GM13976 (cell line): ENCODE measurements at regions of chr12 and their contacts with region 1.

Region 1: GRCh38 chr12:46153268-46153872 is 115.5 kb downstream of the SLC38A1 start:
- DNase-seq: no peak
- CTCF ChIP-seq: peak; percentile 60

Region 2: DNA sequence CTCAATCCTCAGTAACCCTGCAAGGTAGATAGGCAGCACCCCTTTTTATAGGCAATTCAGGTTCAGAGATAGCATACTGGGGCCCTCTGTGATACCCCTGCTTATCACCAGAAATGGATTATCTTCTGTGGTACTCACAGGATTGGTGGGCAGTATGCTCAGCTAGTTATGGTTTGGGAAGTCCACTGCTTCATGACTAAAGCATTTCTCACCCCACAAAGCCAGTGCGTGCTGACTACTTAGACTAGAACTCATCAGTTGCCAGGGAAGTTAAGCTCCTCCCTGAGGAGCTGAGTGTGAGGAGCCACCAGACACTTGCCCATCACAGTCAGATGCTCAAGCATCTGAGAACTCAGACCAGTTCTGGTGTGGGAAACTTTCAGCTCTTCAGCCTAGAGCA is 239.3 kb before region 1 on chr12:
- in situ Hi-C with region 1: no loop called
- DNase-seq: peak; percentile 33
- CTCF ChIP-seq: no peak

Region 3: GRCh38 chr12:46246021-46246700 is 92.8 kb after region 1 on chr12:
- in situ Hi-C with region 1: no loop called
- DNase-seq: no peak
- CTCF ChIP-seq: no peak

Region 4: GRCh38 chr12:46372544-46373110 is 219.3 kb after region 1 on chr12 and contains the start of gene SLC38A2:
- in situ Hi-C with region 1: loop called (anchors 25 kb)
- DNase-seq: peak; percentile 98
- CTCF ChIP-seq: no peak